ENCODE measurements at regions of chr7 and their contacts with region 1.

Region 1: DNA sequence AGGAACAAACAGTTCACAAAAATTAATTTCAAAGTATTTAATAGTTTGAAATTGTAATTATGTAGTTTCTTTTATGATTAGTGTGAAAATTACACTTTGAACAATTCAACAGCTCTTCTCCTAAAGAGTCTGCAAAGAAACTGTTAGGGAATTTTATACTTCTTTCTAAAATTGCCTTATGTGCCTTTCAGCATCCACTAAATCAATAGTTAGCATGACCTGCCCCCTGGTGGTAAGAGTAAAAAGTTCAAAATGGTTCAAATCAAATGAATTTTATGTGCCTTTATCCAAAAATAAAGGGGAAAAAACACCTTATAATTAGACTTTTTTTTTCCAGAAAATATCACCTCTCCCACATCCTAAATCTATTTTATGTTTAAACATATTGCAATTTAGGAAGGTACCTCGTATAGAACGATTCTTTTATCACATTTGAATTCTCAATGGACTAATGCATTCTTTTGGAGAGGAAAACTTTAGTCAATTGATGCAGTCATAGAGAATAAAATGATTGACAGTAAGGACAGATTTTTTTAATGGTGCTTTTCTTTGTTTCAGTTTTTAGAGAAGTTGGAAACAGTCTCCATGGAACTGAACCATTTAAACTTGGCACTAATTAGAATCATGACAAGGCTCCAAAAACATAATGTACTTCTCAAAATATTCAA is 163.7 kb downstream of the SEMA3D start:
- DNase-seq: no peak
- ATAC-seq: no peak
- H3K4me3 ChIP-seq: no peak overlapping the region
- H3K27ac ChIP-seq: no peak overlapping the region
- H3K4me1 ChIP-seq: no peaks in the 10 kb centered on the region
- H3K27me3 ChIP-seq: no peaks in the 10 kb centered on the region
- CTCF ChIP-seq: peak; percentile 78

Region 2: DNA sequence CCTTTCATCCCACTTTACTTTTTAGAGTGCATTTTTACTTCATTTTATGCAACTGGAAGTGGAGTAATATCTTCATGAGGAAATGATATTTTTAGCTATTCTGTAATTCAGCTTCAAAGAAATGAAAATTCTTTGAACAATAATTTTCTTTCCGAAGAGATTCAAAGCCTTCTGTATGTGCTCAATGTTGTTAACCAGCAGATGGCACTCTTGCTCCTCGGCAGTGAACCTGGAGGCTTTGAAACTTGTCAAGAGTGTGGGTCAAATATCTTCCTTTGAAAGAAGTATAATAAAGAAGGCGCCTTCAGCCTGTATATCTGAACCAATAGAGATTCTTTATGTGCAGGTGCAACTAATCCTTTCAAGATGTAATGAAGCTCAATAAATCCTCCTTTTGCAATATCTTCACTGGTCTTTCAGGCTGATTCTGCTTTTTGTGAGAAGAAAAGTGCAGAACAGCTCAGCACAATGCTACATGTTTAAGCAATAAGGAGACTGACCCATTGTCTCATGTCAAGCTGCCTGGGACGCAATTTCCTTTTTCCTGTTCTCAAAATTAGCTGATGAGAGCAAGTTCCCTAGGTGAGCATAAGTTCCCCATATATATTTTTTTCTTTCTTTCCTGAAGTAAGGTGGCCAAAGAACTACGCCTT is 1087.0 kb before region 1 on chr7:
- intact Hi-C with region 1: loop called in 1 of 2 experiments (anchors 2 kb)
- DNase-seq: peak; percentile 14 to 54
- ATAC-seq: peak in 2 of 4 donors; percentile 51 to 63
- H3K4me3 ChIP-seq: no peak overlapping the region
- H3K27ac ChIP-seq: no peak overlapping the region
- H3K4me1 ChIP-seq: no peaks in the 10 kb centered on the region
- H3K27me3 ChIP-seq: no peaks in the 10 kb centered on the region
- CTCF ChIP-seq: peak; percentile 74

Region 3: GRCh38 chr7:83976295-83976694 is 1046.9 kb before region 1 on chr7:
- intact Hi-C with region 1: loop called (anchors 2 to 5 kb)
- DNase-seq: no peak
- ATAC-seq: peak in 2 of 4 donors; percentile 58 to 67
- H3K4me3 ChIP-seq: no peak overlapping the region
- H3K27ac ChIP-seq: no peak overlapping the region
- H3K4me1 ChIP-seq: no peaks in the 10 kb centered on the region
- H3K27me3 ChIP-seq: no peaks in the 10 kb centered on the region
- CTCF ChIP-seq: peak; percentile 62

Region 4: DNA sequence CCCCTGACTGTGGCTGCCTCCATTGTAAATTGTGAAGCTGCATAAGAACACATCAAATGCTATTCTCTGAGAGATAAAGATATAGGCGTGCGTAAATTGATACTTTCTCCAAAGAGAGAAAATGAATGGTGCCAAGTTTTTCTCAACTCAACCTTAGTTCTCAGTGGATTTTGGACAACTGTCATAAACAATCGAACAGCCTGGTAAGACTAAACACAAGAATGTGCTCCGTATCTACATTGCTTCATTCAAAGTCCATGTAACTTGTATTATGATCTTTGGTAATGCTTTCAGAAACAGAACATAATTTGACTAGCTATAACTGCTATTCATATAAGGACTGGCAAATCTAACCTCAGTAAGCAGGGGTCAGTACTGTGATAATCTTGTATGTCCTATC is 265.4 kb before region 1 on chr7:
- intact Hi-C with region 1: no loop called
- DNase-seq: no peak
- ATAC-seq: no peak
- H3K4me3 ChIP-seq: no peak overlapping the region
- H3K27ac ChIP-seq: no peak overlapping the region
- H3K4me1 ChIP-seq: no peaks in the 10 kb centered on the region
- H3K27me3 ChIP-seq: no peaks in the 10 kb centered on the region
- CTCF ChIP-seq: no peak

Region 5: DNA sequence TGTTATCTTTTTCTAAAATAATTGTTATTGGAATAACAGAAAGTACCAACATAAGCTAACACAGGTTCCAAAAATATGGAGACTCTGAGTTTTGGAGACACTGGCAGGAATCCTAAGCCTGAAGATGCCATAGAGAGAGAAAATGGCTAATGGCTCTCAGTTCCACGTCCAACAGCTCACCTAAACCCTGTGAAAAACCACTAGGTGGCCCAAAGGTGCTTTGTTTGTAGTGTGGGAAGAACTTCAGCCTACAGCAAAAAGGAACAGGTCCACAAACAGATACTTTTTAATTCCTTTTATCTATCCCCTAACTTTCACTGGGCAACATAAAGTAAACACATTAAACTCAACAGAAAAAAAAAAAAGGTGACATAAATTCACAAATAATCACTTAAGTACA is 108.6 kb before region 1 on chr7:
- intact Hi-C with region 1: loop called in 1 of 2 experiments (anchors 10 kb)
- DNase-seq: no peak
- ATAC-seq: no peak
- H3K4me3 ChIP-seq: no peak overlapping the region
- H3K27ac ChIP-seq: no peak overlapping the region
- H3K4me1 ChIP-seq: no peaks in the 10 kb centered on the region
- H3K27me3 ChIP-seq: no peaks in the 10 kb centered on the region
- CTCF ChIP-seq: no peak

Measured in psoas muscle (tissue), 8 donors.